ENCODE measurements at regions of chr18 and their contacts with region 1.

Region 1: DNA sequence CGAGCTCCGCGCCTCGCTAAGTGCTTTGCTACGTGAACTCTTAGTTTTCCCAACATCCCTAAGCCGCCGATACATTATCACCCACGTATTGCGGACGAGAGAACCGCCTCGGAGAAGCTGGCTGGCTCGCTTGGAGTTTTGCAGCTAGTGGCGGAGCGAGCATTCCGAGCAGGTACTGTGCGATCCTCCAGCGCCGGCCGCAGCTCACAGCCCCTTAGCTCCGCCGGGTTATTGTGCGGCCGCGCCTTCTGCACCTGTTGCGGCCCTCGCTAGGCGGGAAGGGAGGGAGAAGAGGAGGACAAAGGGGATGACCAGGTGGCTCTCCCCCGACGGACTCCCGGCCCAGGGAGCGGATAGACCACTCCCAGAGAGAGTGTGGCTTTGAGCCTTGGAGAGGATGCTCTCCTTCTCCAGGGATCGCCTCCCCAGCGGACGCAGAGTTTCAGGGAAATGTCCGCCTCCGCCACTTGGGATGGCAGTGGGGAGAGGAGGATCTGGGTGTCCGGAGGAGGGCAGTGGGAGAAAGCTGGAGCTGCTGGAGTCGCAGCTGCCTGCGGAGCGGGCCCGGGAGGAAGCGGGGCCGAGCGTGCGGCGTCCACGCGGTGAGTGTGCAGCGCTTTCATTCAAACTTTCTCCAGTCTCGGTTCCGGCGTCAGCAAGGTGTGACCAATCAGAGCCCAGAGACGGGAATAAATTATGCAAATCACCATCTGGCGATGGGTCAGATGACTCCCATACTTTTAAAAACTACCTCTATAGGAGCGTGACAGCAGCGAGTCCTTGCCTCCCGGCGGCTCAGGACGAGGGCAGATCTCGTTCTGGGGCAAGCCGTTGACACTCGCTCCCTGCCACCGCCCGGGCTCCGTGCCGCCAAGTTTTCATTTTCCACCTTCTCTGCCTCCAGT is at the start of gene LIPG:
- DNase-seq: peak; percentile 93
- H3K4me3 Mint-ChIP-seq: peak within 1 kb of the TSS; percentile 66
- H3K27ac Mint-ChIP-seq: peak within 1 kb of the TSS; percentile 1
- H3K4me1 Mint-ChIP-seq: peaks cover 49% of the 10 kb centered on the region
- H3K27me3 Mint-ChIP-seq: no peaks in the 10 kb centered on the region
- CTCF ChIP-seq: no peak
- total RNA-seq, gene LIPG: 57.8 and 67.6 TPM in 2 replicates

Region 2: DNA sequence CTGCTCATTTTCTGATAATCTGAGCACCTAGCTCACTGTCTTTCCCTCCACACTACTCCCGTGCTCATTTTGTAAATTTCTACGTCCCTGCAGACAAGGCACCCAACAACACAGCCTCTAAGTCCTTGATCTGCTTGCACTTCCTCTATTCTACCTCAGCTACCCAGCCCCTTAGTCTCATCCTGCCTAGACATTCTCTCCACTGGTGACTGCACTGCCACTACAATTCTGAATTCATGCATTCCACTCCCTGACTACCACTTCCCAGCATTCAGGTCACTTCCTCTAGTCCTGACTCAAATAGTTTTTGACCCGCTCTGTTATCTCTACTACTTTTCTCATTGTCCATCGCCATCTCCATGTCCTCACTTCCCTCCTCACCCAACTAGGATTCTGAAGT is 256.8 kb before region 1 on chr18:
- CTCF ChIA-PET with region 1: no interaction called
- POLR2A ChIA-PET with region 1: no interaction called
- intact Hi-C with region 1: no loop called
- DNase-seq: no peak
- H3K4me3 Mint-ChIP-seq: no peak overlapping the region
- H3K27ac Mint-ChIP-seq: no peak overlapping the region
- H3K4me1 Mint-ChIP-seq: no peaks in the 10 kb centered on the region
- H3K27me3 Mint-ChIP-seq: no peaks in the 10 kb centered on the region
- CTCF ChIP-seq: no peak

Region 3: GRCh38 chr18:49486953-49487710 is 74.4 kb before region 1 on chr18 and contains the start of gene C18orf32:
- CTCF ChIA-PET with region 1: interaction called, 3 read pairs
- POLR2A ChIA-PET with region 1: interaction called, 13 read pairs
- intact Hi-C with region 1: no loop called
- DNase-seq: peak; percentile 95
- H3K4me3 Mint-ChIP-seq: peak within 1 kb of the TSS; percentile 99
- H3K27ac Mint-ChIP-seq: peak within 1 kb of the TSS; percentile 95
- H3K4me1 Mint-ChIP-seq: peaks cover 28% of the 10 kb centered on the region
- H3K27me3 Mint-ChIP-seq: no peaks in the 10 kb centered on the region
- CTCF ChIP-seq: no peak
- total RNA-seq, gene C18orf32: 28.9 and 45.2 TPM in 2 replicates

Region 4: GRCh38 chr18:49584394-49584793 is 22.9 kb after region 1 on chr18:
- CTCF ChIA-PET with region 1: interaction called, 10 read pairs
- POLR2A ChIA-PET with region 1: no interaction called
- intact Hi-C with region 1: no loop called
- DNase-seq: no peak
- H3K4me3 Mint-ChIP-seq: no peak overlapping the region
- H3K27ac Mint-ChIP-seq: no peak overlapping the region
- H3K4me1 Mint-ChIP-seq: no peaks in the 10 kb centered on the region
- H3K27me3 Mint-ChIP-seq: no peaks in the 10 kb centered on the region
- CTCF ChIP-seq: no peak

Region 5: GRCh38 chr18:49728542-49728941 is 167.0 kb after region 1 on chr18:
- CTCF ChIA-PET with region 1: interaction called, 4 read pairs
- POLR2A ChIA-PET with region 1: interaction called, 4 read pairs
- intact Hi-C with region 1: loop called (anchors 1 kb)
- DNase-seq: peak; percentile 74
- H3K4me3 Mint-ChIP-seq: no peak overlapping the region
- H3K27ac Mint-ChIP-seq: no peak overlapping the region
- H3K4me1 Mint-ChIP-seq: peaks cover 8% of the 10 kb centered on the region
- H3K27me3 Mint-ChIP-seq: no peaks in the 10 kb centered on the region
- CTCF ChIP-seq: peak; percentile 64

Region 6: GRCh38 chr18:49768051-49768391 is 206.5 kb after region 1 on chr18:
- CTCF ChIA-PET with region 1: interaction called, 54 read pairs
- POLR2A ChIA-PET with region 1: interaction called, 3 read pairs
- intact Hi-C with region 1: loop called (anchors 1 kb)
- DNase-seq: peak; percentile 62
- H3K4me3 Mint-ChIP-seq: no peak overlapping the region
- H3K27ac Mint-ChIP-seq: no peak overlapping the region
- H3K4me1 Mint-ChIP-seq: no peaks in the 10 kb centered on the region
- H3K27me3 Mint-ChIP-seq: no peaks in the 10 kb centered on the region
- CTCF ChIP-seq: peak; percentile 82

Region 7: DNA sequence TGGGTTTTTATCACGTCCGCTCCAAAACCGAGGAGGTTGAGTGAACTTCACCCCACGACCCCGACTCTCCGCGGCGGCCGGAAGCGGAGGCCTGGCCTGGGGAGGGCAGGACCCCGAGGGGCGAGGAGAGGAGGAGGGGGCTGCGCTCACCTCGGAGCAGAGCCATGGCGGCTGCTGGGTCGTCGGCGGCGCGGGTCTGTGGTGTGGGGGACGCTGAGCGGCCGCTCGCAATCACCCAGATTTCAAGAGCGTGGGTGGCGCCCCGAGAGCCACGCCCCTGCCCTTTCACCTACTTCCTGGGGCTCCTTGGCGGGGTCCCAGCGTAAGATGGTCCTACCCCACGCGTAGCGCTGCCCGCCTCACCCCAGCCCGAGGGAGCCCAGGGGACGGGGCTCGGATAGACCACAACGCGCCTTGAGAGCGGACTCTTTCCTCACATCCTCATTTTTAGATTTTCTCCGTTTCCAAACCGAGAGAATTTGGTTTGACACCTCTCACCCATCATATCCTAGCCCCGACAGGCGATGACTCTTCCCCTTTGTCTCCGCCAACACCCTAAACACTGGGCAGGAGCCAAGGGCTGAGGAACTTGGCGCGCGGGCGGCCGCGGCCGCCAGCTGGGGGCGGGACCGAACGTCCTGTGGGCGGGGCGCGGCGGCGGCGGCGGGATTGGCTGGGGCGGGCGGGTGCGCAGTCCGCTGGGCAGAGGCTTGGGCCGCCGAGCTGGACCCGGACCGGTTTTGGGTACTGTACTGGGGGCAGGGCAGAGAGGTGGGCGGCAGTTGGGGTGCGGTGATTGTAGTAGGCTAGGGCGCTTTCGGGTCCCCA is 252.0 kb after region 1 on chr18 and contains the start of gene ACAA2:
- CTCF ChIA-PET with region 1: no interaction called
- POLR2A ChIA-PET with region 1: interaction called, 11 read pairs
- intact Hi-C with region 1: no loop called
- DNase-seq: peak; percentile 95
- H3K4me3 Mint-ChIP-seq: peak within 1 kb of the TSS; percentile 94
- H3K27ac Mint-ChIP-seq: peak within 1 kb of the TSS; percentile 97
- H3K4me1 Mint-ChIP-seq: peaks cover 28% of the 10 kb centered on the region
- H3K27me3 Mint-ChIP-seq: no peaks in the 10 kb centered on the region
- CTCF ChIP-seq: no peak
- total RNA-seq, gene ACAA2: 82.9 and 84.9 TPM in 2 replicates